ENCODE measurements at regions of chr10 and their contacts with region 1.

Region 1: GRCh38 chr10:79149662-79150443 is 81.1 kb downstream of the ZMIZ1 start:
- DNase-seq: peak; percentile 92 to 97 (median 94)
- ATAC-seq: peak; percentile 88
- H3K4me3 ChIP-seq: no peak overlapping the region; the same call in 1 of the 2 replicates
- H3K27ac ChIP-seq: peak overlapping the region; percentile 85
- H3K4me1 ChIP-seq: peaks cover 83 to 89% of the 10 kb centered on the region in 2 experiments
- H3K27me3 ChIP-seq: no peaks in the 10 kb centered on the region
- CTCF ChIP-seq: no peak
- EP300 ChIP-seq: peak; percentile 41; the same call in 1 of the 2 replicates
- POLR2A ChIP-seq: peak; percentile 71
- RAD21 ChIP-seq: no peak; a peak in 1 of 4 replicates

Region 2: GRCh38 chr10:79137826-79138225 is 12.0 kb before region 1 on chr10:
- CTCF ChIA-PET with region 1: no interaction called
- POLR2A ChIA-PET with region 1: interaction called, 20 read pairs
- in situ Hi-C with region 1: no loop called
- intact Hi-C with region 1: loop called (anchors 2 kb)
- DNase-seq: no peak
- ATAC-seq: no peak
- H3K4me3 ChIP-seq: no peak overlapping the region
- H3K27ac ChIP-seq: no peak overlapping the region
- H3K4me1 ChIP-seq: peaks cover 63 to 66% of the 10 kb centered on the region in 2 experiments
- H3K27me3 ChIP-seq: no peaks in the 10 kb centered on the region
- CTCF ChIP-seq: no peak
- EP300 ChIP-seq: no peak
- POLR2A ChIP-seq: no peak
- RAD21 ChIP-seq: no peak

Region 3: GRCh38 chr10:79374312-79375191 is 224.7 kb after region 1 on chr10:
- CTCF ChIA-PET with region 1: no interaction called
- POLR2A ChIA-PET with region 1: no interaction called
- in situ Hi-C with region 1: no loop called
- intact Hi-C with region 1: no loop called
- DNase-seq: peak; percentile 87 to 88 (median 88)
- ATAC-seq: peak; percentile 97
- H3K4me3 ChIP-seq: no peak overlapping the region
- H3K27ac ChIP-seq: no peak overlapping the region
- H3K4me1 ChIP-seq: peaks cover 8 to 9% of the 10 kb centered on the region in 2 experiments; a peak in 4 of 5 replicates
- H3K27me3 ChIP-seq: peaks cover 0 to 8% of the 10 kb centered on the region in 2 experiments; a peak in 2 of 5 replicates
- CTCF ChIP-seq: peak; percentile 97 to 99 (median 97)
- EP300 ChIP-seq: no peak
- POLR2A ChIP-seq: no peak
- RAD21 ChIP-seq: peak; percentile 99

Measured in K562 (cell line).